Right lobe of liver (tissue), 6 donors: ENCODE measurements at regions of chr7 and their contacts with region 1.

Region 1: GRCh38 chr7:135801045-135801693 is 52.6 kb upstream of the FAM180A start:
- DNase-seq: no peak
- ATAC-seq: peak; percentile 91 to 97 (median 94)
- H3K4me3 ChIP-seq: no peak overlapping the region
- H3K27ac ChIP-seq: no peak overlapping the region
- H3K4me1 ChIP-seq: peaks cover 0 to 2% (median 0%) of the 10 kb centered on the region in 4 donors
- H3K27me3 ChIP-seq: no peaks in the 10 kb centered on the region
- CTCF ChIP-seq: peak; percentile 77 to 91 (median 85)
- POLR2A ChIP-seq: no peak

Region 2: DNA sequence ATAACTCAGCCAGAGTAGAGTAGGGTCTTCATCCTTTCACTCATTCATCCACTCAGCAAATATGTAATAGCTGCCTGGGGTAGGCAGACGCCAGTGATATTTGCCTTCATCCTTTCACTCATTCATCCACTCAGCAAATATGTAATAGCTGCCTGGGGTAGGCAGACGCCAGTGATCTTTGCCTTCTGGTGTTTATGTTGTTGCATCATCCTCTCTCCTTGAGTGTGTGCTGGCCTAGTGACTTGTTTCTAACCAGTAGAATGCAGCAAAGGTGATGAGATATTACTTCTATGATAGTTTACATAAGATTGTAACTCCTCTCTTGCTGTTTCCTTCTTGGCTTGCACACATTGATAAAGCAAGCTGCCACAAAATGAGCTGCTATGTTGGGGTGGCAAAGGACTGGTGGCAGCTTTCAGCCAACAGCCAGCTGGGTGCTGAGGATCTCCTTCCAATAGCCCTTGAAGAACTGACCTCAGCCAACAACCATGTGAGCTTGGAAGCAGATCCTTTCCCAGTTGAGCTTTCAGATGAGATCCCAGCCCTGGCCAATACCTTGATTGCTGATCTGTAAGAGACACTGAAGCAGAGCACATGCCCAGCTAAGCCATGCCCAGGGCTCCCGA is 199.2 kb after region 1 on chr7:
- intact Hi-C with region 1: loop called in 1 of 2 experiments (anchors 5 kb)
- DNase-seq: no peak
- ATAC-seq: no peak
- H3K4me3 ChIP-seq: no peak overlapping the region
- H3K27ac ChIP-seq: no peak overlapping the region
- H3K4me1 ChIP-seq: no peaks in the 10 kb centered on the region
- H3K27me3 ChIP-seq: no peaks in the 10 kb centered on the region
- CTCF ChIP-seq: no peak
- POLR2A ChIP-seq: no peak

Region 3: GRCh38 chr7:136009488-136010079 is 208.4 kb after region 1 on chr7:
- intact Hi-C with region 1: loop called (anchors 5 kb)
- DNase-seq: no peak
- ATAC-seq: peak; percentile 36 to 67 (median 63)
- H3K4me3 ChIP-seq: no peak overlapping the region
- H3K27ac ChIP-seq: no peak overlapping the region
- H3K4me1 ChIP-seq: no peaks in the 10 kb centered on the region
- H3K27me3 ChIP-seq: no peaks in the 10 kb centered on the region
- CTCF ChIP-seq: peak; percentile 67 to 84 (median 76)
- POLR2A ChIP-seq: no peak